Panc1 (cell line): ENCODE measurements at regions of chr5 and their contacts with region 1.

Region 1: GRCh38 chr5:37308796-37309195 is 59.6 kb upstream of the CPLANE1 start:
- DNase-seq: no peak
- ATAC-seq: no peak
- H3K4me3 ChIP-seq: no peak overlapping the region
- H3K27ac ChIP-seq: no peak overlapping the region
- H3K4me1 ChIP-seq: no peaks in the 10 kb centered on the region
- H3K27me3 ChIP-seq: no peaks in the 10 kb centered on the region
- CTCF ChIP-seq: no peak

Region 2: GRCh38 chr5:37283214-37283820 is 25.5 kb before region 1 on chr5:
- CTCF ChIA-PET with region 1: no interaction called
- POLR2A ChIA-PET with region 1: interaction called, 18 read pairs
- in situ Hi-C with region 1: no loop called
- intact Hi-C with region 1: no loop called
- DNase-seq: no peak
- ATAC-seq: no peak
- H3K4me3 ChIP-seq: no peak overlapping the region
- H3K27ac ChIP-seq: no peak overlapping the region
- H3K4me1 ChIP-seq: no peaks in the 10 kb centered on the region
- H3K27me3 ChIP-seq: no peaks in the 10 kb centered on the region
- CTCF ChIP-seq: no peak